ENCODE measurements at regions of chr11 and their contacts with region 1.

Region 1: GRCh38 chr11:117226388-117227385 is 5.2 kb downstream of the PCSK7 start:
- DNase-seq: peak; percentile 71 to 81
- H3K4me3 ChIP-seq: no peak overlapping the region
- H3K4me3 Mint-ChIP-seq: no peak overlapping the region
- H3K27ac Mint-ChIP-seq: no peak overlapping the region
- H3K4me1 ChIP-seq: peaks cover 38% of the 10 kb centered on the region
- H3K4me1 Mint-ChIP-seq: peaks cover 38% of the 10 kb centered on the region
- H3K27me3 ChIP-seq: no peaks in the 10 kb centered on the region
- H3K27me3 Mint-ChIP-seq: no peaks in the 10 kb centered on the region
- CTCF ChIP-seq: peak; percentile 93 to 96

Region 2: DNA sequence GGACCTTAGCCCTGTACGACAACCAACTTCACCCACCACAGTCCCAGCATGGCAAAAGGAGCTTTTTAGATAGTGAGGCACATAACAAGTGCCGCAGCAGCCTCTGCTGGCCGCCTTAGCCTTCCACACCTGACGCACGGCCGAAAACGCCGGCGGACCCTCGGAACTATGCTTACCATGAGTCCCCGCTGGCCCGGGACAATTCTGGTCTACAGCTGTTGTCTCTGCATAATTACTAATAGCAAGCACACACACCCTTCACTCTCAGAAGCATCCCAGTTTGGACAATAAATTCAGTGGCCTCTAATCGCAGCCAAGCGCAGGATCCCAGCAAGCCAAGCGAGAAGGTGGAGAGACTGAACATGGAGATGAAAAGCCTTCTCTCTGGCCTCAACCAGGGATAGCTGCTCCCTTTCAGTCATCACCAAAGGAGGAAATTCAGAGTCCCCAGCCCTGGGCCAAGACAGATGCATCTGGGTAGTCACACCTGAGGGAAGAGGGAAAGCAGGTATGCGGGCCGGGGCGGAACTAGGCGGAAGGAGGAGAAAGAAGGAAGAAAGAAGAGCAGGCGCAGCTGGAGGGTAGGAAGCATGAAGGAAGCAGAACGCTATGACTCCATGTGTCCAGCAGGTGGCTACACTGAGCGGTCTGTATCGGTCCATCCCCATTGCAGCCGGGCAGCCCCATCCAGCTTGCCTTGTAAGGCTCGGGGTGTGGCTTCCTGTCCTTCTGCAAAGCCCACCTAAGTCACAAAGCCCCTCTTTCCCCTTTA is 494.2 kb before region 1 on chr11:
- CTCF ChIA-PET with region 1: interaction called, 5 read pairs
- POLR2A ChIA-PET with region 1: no interaction called
- intact Hi-C with region 1: loop called (anchors 1 kb)
- DNase-seq: peak; percentile 80 to 84
- H3K4me3 ChIP-seq: no peak overlapping the region
- H3K4me3 Mint-ChIP-seq: no peak overlapping the region
- H3K27ac Mint-ChIP-seq: no peak overlapping the region
- H3K4me1 ChIP-seq: peaks cover 9% of the 10 kb centered on the region
- H3K4me1 Mint-ChIP-seq: peaks cover 15% of the 10 kb centered on the region
- H3K27me3 ChIP-seq: no peaks in the 10 kb centered on the region
- H3K27me3 Mint-ChIP-seq: peaks cover 9% of the 10 kb centered on the region
- CTCF ChIP-seq: peak; percentile 97 to 98

Region 3: DNA sequence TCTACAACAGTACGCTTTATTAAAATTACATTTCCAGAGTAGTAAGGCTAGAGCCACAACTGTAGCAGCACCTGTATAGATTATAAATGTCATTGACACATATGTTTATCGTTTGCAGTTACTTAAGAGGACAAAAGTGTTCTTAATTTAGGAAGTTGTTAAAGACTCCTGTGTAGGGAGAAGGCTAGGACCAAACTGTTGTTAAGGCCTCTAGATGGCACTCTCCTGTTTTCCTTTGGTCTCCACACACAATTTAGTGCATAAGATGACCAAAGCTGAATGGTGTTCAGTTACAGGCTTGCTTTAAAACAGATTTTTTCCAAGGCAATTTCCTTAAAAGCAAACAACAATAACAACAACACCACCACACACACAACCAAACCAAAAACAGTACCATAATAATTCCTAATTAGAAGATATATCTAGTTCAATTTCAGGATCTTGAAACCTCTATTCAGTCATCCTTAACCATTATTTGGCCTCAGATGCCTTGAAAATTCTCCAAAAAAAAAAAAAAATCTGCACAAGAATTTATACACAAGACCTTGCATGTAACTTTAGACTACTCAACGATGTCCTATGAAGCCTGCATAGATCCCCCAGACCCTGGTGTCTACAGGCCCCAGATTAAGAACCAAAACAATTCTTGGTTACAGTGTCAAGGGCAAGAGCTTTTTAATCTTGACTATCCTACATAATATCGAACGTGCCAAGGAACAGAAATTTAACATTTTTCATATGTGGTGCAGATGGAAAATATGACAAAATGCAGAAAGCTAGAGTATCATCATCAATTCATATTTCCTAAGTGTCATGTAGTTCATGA is 346.7 kb before region 1 on chr11:
- CTCF ChIA-PET with region 1: interaction called, 3 read pairs
- POLR2A ChIA-PET with region 1: no interaction called
- intact Hi-C with region 1: loop called (anchors 1 kb)
- DNase-seq: peak in 1 of 2 experiments; percentile 64
- H3K4me3 ChIP-seq: no peak overlapping the region
- H3K4me3 Mint-ChIP-seq: no peak overlapping the region
- H3K27ac Mint-ChIP-seq: no peak overlapping the region
- H3K4me1 ChIP-seq: peaks cover 23% of the 10 kb centered on the region
- H3K4me1 Mint-ChIP-seq: peaks cover 40% of the 10 kb centered on the region
- H3K27me3 ChIP-seq: no peaks in the 10 kb centered on the region
- H3K27me3 Mint-ChIP-seq: no peaks in the 10 kb centered on the region
- CTCF ChIP-seq: peak; percentile 71 to 96

Region 4: DNA sequence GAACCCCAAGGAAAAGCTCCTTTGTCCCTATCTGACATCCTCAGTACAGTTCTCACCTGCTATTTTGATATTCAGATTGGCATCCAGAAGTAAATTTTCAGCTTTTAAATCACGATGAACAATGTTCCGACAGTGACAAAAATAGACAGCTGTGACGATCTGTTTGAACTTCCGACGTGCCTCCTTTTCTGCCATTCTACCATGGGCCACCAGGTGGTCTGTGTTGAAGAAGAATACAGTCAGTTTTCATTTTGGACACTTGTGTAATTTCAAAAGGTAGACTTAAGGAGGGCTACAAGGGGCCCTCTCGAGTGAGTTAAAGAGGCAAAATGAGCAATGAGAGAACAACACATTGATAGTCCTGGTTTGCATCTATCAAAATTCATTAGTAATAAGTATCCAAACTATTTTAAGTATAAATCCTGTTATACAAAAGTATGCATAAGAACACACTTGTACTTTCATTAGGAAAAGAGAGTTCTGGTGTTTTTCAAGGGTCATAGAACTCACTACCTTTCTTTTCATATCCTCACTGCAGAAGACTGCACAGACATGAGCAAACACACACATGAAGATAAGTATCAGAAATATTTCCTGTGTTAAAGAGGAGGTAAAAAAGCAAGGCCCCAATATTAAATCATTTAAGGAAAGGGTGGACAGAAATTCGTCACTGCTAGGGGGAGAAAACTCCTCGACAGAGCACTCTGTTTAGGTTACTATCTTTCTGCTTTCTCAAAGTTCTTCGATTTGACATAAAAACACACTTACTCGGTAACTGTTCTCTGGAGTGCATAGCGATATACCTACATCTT is 299.3 kb before region 1 on chr11:
- CTCF ChIA-PET with region 1: no interaction called
- POLR2A ChIA-PET with region 1: no interaction called
- intact Hi-C with region 1: loop called (anchors 1 kb)
- DNase-seq: peak in 1 of 2 experiments; percentile 69
- H3K4me3 ChIP-seq: no peak overlapping the region
- H3K4me3 Mint-ChIP-seq: no peak overlapping the region
- H3K27ac Mint-ChIP-seq: no peak overlapping the region
- H3K4me1 ChIP-seq: peaks cover 17% of the 10 kb centered on the region; the same call in 1 of the 2 replicates
- H3K4me1 Mint-ChIP-seq: peaks cover 22% of the 10 kb centered on the region
- H3K27me3 ChIP-seq: no peaks in the 10 kb centered on the region
- H3K27me3 Mint-ChIP-seq: no peaks in the 10 kb centered on the region
- CTCF ChIP-seq: peak; percentile 82 to 85

Region 5: DNA sequence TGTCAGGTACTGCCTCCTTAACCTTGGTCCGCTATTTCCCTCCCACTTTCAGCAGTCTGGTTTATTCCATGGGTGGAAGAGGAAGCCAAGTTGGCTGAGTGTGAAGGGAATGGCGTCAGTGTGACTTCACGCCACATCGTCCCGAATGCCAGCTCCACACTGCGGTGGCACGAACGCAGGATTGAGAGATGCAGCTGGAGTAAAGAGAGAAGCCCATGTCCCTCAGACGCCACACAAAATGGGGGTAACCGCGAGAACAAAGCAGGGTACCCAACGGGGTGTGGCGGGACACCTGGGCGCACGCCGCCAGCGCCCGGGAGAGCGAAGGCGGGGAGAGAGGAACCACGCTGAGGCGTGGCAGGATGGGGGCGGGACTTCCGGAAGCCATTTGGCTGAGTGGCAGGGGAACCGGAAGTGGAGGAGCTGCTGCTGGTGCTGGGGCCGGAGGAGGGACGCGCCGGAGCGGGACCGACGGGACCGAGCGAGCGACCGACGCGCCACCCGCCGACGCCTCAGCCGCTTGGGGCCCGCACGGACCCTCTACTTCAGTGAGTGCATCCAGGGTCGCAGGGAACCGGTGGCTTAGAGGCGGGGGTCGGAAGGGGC is 82.7 kb before region 1 on chr11 and contains the start of gene PAFAH1B2:
- CTCF ChIA-PET with region 1: interaction called, 11 read pairs
- POLR2A ChIA-PET with region 1: interaction called, 10 read pairs
- intact Hi-C with region 1: no loop called
- DNase-seq: peak; percentile 98 to 99
- H3K4me3 ChIP-seq: peak within 1 kb of the TSS; percentile 89
- H3K4me3 Mint-ChIP-seq: peak within 1 kb of the TSS; percentile 98
- H3K27ac Mint-ChIP-seq: peak within 1 kb of the TSS; percentile 95
- H3K4me1 ChIP-seq: peaks cover 6% of the 10 kb centered on the region; the same call in 1 of the 2 replicates
- H3K4me1 Mint-ChIP-seq: peaks cover 6% of the 10 kb centered on the region
- H3K27me3 ChIP-seq: no peaks in the 10 kb centered on the region
- H3K27me3 Mint-ChIP-seq: no peaks in the 10 kb centered on the region
- CTCF ChIP-seq: no peak
- total RNA-seq, gene PAFAH1B2: 167 and 168 TPM in 2 replicates

Region 6: GRCh38 chr11:117178210-117179034 is 48.3 kb before region 1 on chr11 and contains the start of gene SIDT2:
- CTCF ChIA-PET with region 1: interaction called, 38 read pairs
- POLR2A ChIA-PET with region 1: interaction called, 7 read pairs
- intact Hi-C with region 1: loop called (anchors 1 kb)
- DNase-seq: peak; percentile 96 to 97
- H3K4me3 ChIP-seq: peak within 1 kb of the TSS; percentile 87
- H3K4me3 Mint-ChIP-seq: peak within 1 kb of the TSS; percentile 97
- H3K27ac Mint-ChIP-seq: peak within 1 kb of the TSS; percentile 96
- H3K4me1 ChIP-seq: peaks cover 20% of the 10 kb centered on the region
- H3K4me1 Mint-ChIP-seq: peaks cover 23% of the 10 kb centered on the region
- H3K27me3 ChIP-seq: no peaks in the 10 kb centered on the region
- H3K27me3 Mint-ChIP-seq: no peaks in the 10 kb centered on the region
- CTCF ChIP-seq: no peak
- total RNA-seq, gene SIDT2: 57.2 and 61.7 TPM in 2 replicates

Region 7: DNA sequence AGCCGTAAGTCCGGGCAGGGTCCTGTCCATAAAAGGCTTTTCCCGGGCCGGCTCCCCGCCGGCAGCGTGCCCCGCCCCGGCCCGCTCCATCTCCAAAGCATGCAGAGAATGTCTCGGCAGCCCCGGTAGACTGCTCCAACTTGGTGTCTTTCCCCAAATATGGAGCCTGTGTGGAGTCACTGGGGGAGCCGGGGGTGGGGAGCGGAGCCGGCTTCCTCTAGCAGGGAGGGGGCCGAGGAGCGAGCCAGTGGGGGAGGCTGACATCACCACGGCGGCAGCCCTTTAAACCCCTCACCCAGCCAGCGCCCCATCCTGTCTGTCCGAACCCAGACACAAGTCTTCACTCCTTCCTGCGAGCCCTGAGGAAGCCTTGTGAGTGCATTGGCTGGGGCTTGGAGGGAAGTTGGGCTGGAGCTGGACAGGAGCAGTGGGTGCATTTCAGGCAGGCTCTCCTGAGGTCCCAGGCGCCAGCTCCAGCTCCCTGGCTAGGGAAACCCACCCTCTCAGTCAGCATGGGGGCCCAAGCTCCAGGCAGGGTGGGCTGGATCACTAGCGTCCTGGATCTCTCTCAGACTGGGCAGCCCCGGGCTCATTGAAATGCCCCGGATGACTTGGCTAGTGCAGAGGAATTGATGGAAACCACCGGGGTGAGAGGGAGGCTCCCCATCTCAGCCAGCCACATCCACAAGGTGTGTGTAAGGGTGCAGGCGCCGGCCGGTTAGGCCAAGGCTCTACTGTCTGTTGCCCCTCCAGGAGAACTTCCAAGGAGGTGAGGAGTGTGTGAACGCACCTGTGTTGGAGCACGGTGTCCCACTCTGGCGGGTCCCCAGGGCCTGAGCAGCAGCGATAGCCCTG is 27.4 kb before region 1 on chr11 and contains the start of gene TAGLN:
- CTCF ChIA-PET with region 1: interaction called, 6 read pairs
- POLR2A ChIA-PET with region 1: interaction called, 3 read pairs
- intact Hi-C with region 1: loop called (anchors 2 kb)
- DNase-seq: peak; percentile 89
- H3K4me3 ChIP-seq: peak within 1 kb of the TSS; percentile 20
- H3K4me3 Mint-ChIP-seq: peak within 1 kb of the TSS; percentile 72
- H3K27ac Mint-ChIP-seq: peak within 1 kb of the TSS; percentile 86
- H3K4me1 ChIP-seq: peaks cover 37% of the 10 kb centered on the region
- H3K4me1 Mint-ChIP-seq: peaks cover 34% of the 10 kb centered on the region
- H3K27me3 ChIP-seq: no peaks in the 10 kb centered on the region
- H3K27me3 Mint-ChIP-seq: no peaks in the 10 kb centered on the region
- CTCF ChIP-seq: no peak
- total RNA-seq, gene TAGLN: 303 and 588 TPM in 2 replicates

Region 8: GRCh38 chr11:118088477-118088920 is 861.8 kb after region 1 on chr11:
- CTCF ChIA-PET with region 1: no interaction called
- POLR2A ChIA-PET with region 1: no interaction called
- intact Hi-C with region 1: no loop called
- DNase-seq: no peak
- H3K4me3 ChIP-seq: no peak overlapping the region
- H3K4me3 Mint-ChIP-seq: no peak overlapping the region
- H3K27ac Mint-ChIP-seq: no peak overlapping the region
- H3K4me1 ChIP-seq: peaks cover 38% of the 10 kb centered on the region
- H3K4me1 Mint-ChIP-seq: peaks cover 38% of the 10 kb centered on the region
- H3K27me3 ChIP-seq: no peaks in the 10 kb centered on the region
- H3K27me3 Mint-ChIP-seq: no peaks in the 10 kb centered on the region
- CTCF ChIP-seq: no peak

Measured in Caco-2 (cell line).